Mammary epithelial cell (primary cell): ENCODE measurements at regions of chr12 and their contacts with region 1.

Region 1: DNA sequence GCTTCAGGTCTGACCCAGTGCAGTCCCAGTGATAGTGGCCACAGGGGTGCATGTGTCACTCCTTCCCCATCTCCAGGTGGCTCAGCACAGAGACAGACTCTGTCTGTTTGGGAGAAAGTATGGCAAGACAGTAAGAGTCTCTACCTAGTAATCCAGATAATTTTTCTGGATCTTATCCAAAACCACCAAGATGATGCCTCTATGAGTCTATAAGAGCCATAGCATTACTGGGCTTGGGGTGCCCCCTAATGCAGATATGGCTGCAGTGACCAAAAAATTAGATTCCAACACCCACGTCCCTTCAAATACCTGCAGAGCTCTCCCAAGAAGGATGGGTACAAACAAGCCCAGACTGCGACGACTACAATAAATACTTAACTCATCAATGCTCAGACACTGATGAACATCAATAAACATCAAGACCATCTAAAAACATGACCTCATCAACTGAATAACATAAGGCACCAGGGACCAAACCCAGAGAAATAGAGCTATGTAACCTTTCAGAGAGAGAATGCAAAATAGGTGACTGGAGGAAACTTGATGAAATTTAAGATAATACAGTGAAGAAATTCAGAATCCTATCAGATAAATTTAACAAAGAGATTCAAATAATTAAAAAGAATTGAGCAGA is 123.6 kb downstream of the GRIP1 start:
- DNase-seq: peak; percentile 78
- H3K4me3 ChIP-seq: no peak overlapping the region
- H3K27ac ChIP-seq: no peak overlapping the region
- H3K4me1 ChIP-seq: peaks cover 3% of the 10 kb centered on the region
- H3K27me3 ChIP-seq: no peaks in the 10 kb centered on the region
- CTCF ChIP-seq: peak; percentile 27 to 38

Region 2: GRCh38 chr12:66119870-66120241 is 435.4 kb before region 1 on chr12:
- CTCF ChIA-PET with region 1: no interaction called
- dilution Hi-C with region 1: no loop called
- in situ Hi-C with region 1: no loop called
- intact Hi-C with region 1: no loop called
- DNase-seq: no peak
- H3K4me3 ChIP-seq: no peak overlapping the region
- H3K27ac ChIP-seq: no peak overlapping the region
- H3K4me1 ChIP-seq: no peaks in the 10 kb centered on the region
- H3K27me3 ChIP-seq: no peaks in the 10 kb centered on the region
- CTCF ChIP-seq: no peak

Region 3: GRCh38 chr12:66279123-66279712 is 276.0 kb before region 1 on chr12:
- CTCF ChIA-PET with region 1: no interaction called
- dilution Hi-C with region 1: no loop called
- in situ Hi-C with region 1: no loop called
- intact Hi-C with region 1: loop called (anchors 1 kb)
- DNase-seq: no peak
- H3K4me3 ChIP-seq: no peak overlapping the region
- H3K27ac ChIP-seq: no peak overlapping the region
- H3K4me1 ChIP-seq: peaks cover 5% of the 10 kb centered on the region
- H3K27me3 ChIP-seq: no peaks in the 10 kb centered on the region
- CTCF ChIP-seq: peak; percentile 87 to 90

Region 4: DNA sequence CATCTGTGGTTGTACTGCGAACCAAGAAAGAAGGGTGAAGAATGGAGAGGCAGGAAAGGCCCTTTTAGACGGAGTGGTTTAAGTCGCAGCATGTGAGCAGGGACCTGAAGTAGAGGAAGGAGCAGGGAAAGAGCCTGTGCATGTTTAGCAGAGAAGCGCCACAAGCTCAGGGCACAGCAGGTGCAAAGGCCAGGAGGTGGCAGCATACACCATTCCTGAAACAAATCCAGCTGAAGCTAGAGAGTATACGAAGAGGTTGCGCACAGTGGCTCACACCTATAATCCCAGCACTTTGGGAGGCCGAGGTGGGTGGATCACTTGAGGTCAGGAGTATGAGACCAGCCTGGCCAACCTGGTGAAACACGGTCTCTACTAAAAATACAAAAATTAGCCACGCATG is 203.0 kb before region 1 on chr12:
- CTCF ChIA-PET with region 1: no interaction called
- dilution Hi-C with region 1: no loop called
- in situ Hi-C with region 1: no loop called
- intact Hi-C with region 1: loop called (anchors 1 kb)
- DNase-seq: no peak
- H3K4me3 ChIP-seq: no peak overlapping the region
- H3K27ac ChIP-seq: no peak overlapping the region
- H3K4me1 ChIP-seq: no peaks in the 10 kb centered on the region
- H3K27me3 ChIP-seq: no peaks in the 10 kb centered on the region
- CTCF ChIP-seq: peak; percentile 36 to 41

Region 5: GRCh38 chr12:66430106-66430505 is 125.1 kb before region 1 on chr12:
- CTCF ChIA-PET with region 1: no interaction called
- dilution Hi-C with region 1: no loop called
- in situ Hi-C with region 1: no loop called
- intact Hi-C with region 1: loop called (anchors 5 kb)
- DNase-seq: no peak
- H3K4me3 ChIP-seq: no peak overlapping the region
- H3K27ac ChIP-seq: no peak overlapping the region
- H3K4me1 ChIP-seq: no peaks in the 10 kb centered on the region
- H3K27me3 ChIP-seq: no peaks in the 10 kb centered on the region
- CTCF ChIP-seq: no peak

Region 6: GRCh38 chr12:66533767-66534166 is 21.5 kb before region 1 on chr12:
- CTCF ChIA-PET with region 1: no interaction called
- dilution Hi-C with region 1: no loop called
- in situ Hi-C with region 1: no loop called
- intact Hi-C with region 1: no loop called
- DNase-seq: no peak
- H3K4me3 ChIP-seq: no peak overlapping the region
- H3K27ac ChIP-seq: no peak overlapping the region
- H3K4me1 ChIP-seq: no peaks in the 10 kb centered on the region
- H3K27me3 ChIP-seq: no peaks in the 10 kb centered on the region
- CTCF ChIP-seq: no peak

Region 7: GRCh38 chr12:66693901-66694675 is 138.9 kb after region 1 on chr12:
- CTCF ChIA-PET with region 1: no interaction called
- dilution Hi-C with region 1: no loop called
- in situ Hi-C with region 1: no loop called
- intact Hi-C with region 1: loop called (anchors 1 kb)
- DNase-seq: peak; percentile 49
- H3K4me3 ChIP-seq: no peak overlapping the region
- H3K27ac ChIP-seq: no peak overlapping the region
- H3K4me1 ChIP-seq: no peaks in the 10 kb centered on the region
- H3K27me3 ChIP-seq: no peaks in the 10 kb centered on the region
- CTCF ChIP-seq: peak; percentile 47 to 68